Naive thymus-derived CD4-positive, alpha-beta T cell (primary cell): ENCODE measurements at regions of chr6 and their contacts with region 1.

Region 1: DNA sequence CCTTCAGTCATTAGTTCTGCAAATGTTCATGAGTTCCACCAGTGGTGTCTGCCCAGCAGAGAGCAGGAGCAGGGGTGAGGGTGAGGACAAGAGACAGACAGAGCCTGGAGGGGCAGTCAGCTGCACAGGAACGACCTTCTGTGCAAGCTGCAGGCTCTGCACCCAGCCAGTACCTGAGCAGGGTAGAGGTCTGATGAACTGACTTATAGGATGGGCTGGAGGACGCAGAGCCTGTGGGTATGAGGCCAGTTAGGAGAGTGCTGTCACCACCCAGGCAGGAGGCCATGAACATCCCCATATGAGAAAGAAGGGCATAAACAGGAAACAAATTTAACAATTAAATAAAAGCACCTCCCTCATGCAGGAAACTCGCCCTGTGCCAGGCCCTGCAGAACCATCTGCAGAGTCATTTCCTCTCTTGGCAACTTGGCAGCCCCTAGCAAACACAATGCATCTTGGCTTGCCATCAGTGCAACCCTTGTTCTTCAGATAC is 17.9 kb downstream of the C6orf15 start:
- DNase-seq: peak in 7 of 9 donors; percentile 13 to 75 (median 65)
- ATAC-seq: peak; percentile 78
- H3K4me3 ChIP-seq: peak overlapping the region; percentile 20
- H3K4me3 Mint-ChIP-seq: peak overlapping the region; percentile 58 to 91 (median 76)
- H3K27ac ChIP-seq: peak overlapping the region; percentile 39
- H3K27ac Mint-ChIP-seq: peak overlapping the region; percentile 75 to 99 (median 96)
- H3K4me1 ChIP-seq: peaks cover 28 to 39% of the 10 kb centered on the region in 2 donors
- H3K4me1 Mint-ChIP-seq: peaks cover 16 to 54% (median 42%) of the 10 kb centered on the region in 7 donors
- H3K27me3 ChIP-seq: no peaks in the 10 kb centered on the region
- H3K27me3 Mint-ChIP-seq: peaks cover 0 to 12% (median 0%) of the 10 kb centered on the region in 5 donors

Region 2: GRCh38 chr6:31114970-31115849 is 20.8 kb after region 1 on chr6:
- CTCF ChIA-PET with region 1: interaction called, 15 read pairs
- POLR2A ChIA-PET with region 1: interaction called, 11 read pairs
- intact Hi-C with region 1: loop called in 1 of 2 experiments (anchors 1 kb)
- DNase-seq: peak in 3 of 9 donors; percentile 23 to 45 (median 23)
- ATAC-seq: no peak
- H3K4me3 ChIP-seq: no peak overlapping the region
- H3K4me3 Mint-ChIP-seq: peak overlapping the region in 2 of 10 donors; percentile 28 to 46
- H3K27ac ChIP-seq: no peak overlapping the region
- H3K27ac Mint-ChIP-seq: peak overlapping the region in 2 of 9 donors; percentile 32 to 76
- H3K4me1 ChIP-seq: no peaks in the 10 kb centered on the region
- H3K4me1 Mint-ChIP-seq: peaks cover 0 to 12% (median 5%) of the 10 kb centered on the region in 7 donors
- H3K27me3 ChIP-seq: no peaks in the 10 kb centered on the region
- H3K27me3 Mint-ChIP-seq: peaks cover 0 to 24% (median 9%) of the 10 kb centered on the region in 5 donors

Region 3: GRCh38 chr6:31128093-31128676 is 33.8 kb after region 1 on chr6:
- CTCF ChIA-PET with region 1: interaction called, 6 read pairs
- POLR2A ChIA-PET with region 1: interaction called, 4 read pairs
- intact Hi-C with region 1: loop called in 1 of 2 experiments (anchors 1 kb)
- DNase-seq: peak; percentile 29 to 79 (median 55)
- ATAC-seq: peak; percentile 87
- H3K4me3 ChIP-seq: no peak overlapping the region
- H3K4me3 Mint-ChIP-seq: no peak overlapping the region
- H3K27ac ChIP-seq: no peak overlapping the region
- H3K27ac Mint-ChIP-seq: peak overlapping the region in 2 of 9 donors; percentile 0 to 1
- H3K4me1 ChIP-seq: no peaks in the 10 kb centered on the region
- H3K4me1 Mint-ChIP-seq: peaks cover 5 to 8% (median 6%) of the 10 kb centered on the region in 7 donors
- H3K27me3 ChIP-seq: no peaks in the 10 kb centered on the region
- H3K27me3 Mint-ChIP-seq: peaks cover 0 to 17% (median 5%) of the 10 kb centered on the region in 5 donors

Region 4: DNA sequence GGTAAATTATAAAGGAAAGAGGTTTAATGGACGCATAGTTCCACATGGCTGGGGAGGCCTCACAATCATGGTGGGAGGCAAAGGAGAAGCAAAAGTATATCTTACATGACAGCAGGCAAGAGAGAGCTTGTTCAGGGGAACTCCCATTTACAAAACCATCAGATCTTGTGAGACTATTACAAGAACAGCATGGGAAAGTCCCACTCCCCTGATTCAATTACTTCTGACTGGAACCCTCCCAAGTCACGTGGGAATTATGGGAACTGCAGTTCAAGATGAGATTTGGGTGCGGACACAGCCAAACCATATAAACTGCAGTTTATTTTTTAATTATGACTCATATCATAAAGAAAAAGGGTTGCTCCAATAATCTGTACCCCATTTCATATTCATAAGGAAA is 1624.4 kb after region 1 on chr6:
- CTCF ChIA-PET with region 1: no interaction called
- POLR2A ChIA-PET with region 1: no interaction called
- intact Hi-C with region 1: no loop called
- DNase-seq: no peak
- ATAC-seq: no peak
- H3K4me3 ChIP-seq: no peak overlapping the region
- H3K4me3 Mint-ChIP-seq: no peak overlapping the region
- H3K27ac ChIP-seq: no peak overlapping the region
- H3K27ac Mint-ChIP-seq: no peak overlapping the region
- H3K4me1 ChIP-seq: no peaks in the 10 kb centered on the region
- H3K4me1 Mint-ChIP-seq: peaks cover 0 to 2% (median 0%) of the 10 kb centered on the region in 7 donors
- H3K27me3 ChIP-seq: no peaks in the 10 kb centered on the region
- H3K27me3 Mint-ChIP-seq: peaks cover 35 to 44% (median 41%) of the 10 kb centered on the region in 5 donors